ENCODE measurements at regions of chr16 and their contacts with region 1.

Region 1: DNA sequence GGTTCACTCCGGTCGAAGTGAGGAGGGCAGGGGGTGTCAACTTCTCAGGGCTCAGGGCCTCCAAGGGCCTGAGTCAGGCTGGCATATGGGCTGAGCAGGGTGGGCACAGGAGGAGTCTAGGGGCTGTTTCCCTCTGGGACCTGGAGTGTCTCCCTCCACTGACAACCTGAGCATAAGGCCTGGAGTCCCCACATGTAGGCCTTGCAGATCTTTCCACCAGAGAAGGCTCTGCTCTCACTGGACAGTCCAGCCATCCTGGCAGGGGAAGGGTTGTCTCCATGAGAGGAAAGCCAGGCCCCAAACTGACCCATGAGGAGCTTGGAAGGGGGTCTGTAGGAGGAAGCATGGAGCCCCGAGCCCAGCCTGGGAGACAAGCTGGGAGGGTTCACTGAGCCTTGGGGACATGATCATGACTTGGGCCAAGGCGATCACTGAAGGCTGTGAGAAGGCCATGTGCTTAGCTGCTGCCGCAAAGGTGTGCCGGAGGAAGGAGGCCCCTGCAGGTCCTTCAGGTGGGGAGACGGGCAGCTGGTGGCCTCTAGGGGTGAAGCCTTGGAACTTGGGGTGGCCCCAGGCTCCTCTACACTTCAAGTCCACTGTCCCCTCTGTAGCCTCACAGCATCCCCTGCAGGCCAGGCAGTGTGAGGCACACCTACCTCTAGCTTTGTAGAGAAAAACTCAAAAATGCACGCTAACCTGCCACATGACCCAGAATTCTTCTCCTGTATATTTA is 9.9 kb downstream of the CMTM2 start:
- DNase-seq: peak; percentile 83
- ATAC-seq: peak; percentile 88
- H3K4me3 Mint-ChIP-seq: peak overlapping the region; percentile 55
- H3K27ac Mint-ChIP-seq: peak overlapping the region; percentile 55
- H3K4me1 Mint-ChIP-seq: peaks cover 52% of the 10 kb centered on the region
- H3K27me3 Mint-ChIP-seq: no peaks in the 10 kb centered on the region

Region 2: DNA sequence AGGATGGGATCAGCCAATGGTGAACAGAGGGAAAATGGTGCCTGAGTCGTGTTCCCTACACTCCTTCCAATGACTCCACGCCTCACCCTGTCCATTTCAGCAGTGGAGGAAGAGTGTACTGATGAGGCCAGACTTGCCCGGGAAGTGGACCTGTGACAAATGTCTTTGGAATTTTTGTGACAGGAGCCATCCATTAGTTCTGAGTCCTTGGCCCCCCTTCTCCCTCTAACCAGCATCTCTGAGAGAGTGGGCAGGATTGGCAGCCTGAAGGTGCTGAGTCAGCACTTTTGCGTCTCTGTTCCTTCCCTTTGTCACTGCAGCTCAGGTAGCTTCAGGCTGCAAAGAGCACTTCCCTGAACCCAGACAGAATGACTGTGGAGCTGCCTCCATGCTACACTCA is 131.3 kb before region 1 on chr16:
- CTCF ChIA-PET with region 1: no interaction called
- POLR2A ChIA-PET with region 1: no interaction called
- DNase-seq: no peak
- ATAC-seq: no peak
- H3K4me3 Mint-ChIP-seq: no peak overlapping the region
- H3K27ac Mint-ChIP-seq: no peak overlapping the region
- H3K4me1 Mint-ChIP-seq: peaks cover 4% of the 10 kb centered on the region
- H3K27me3 Mint-ChIP-seq: peaks cover 17% of the 10 kb centered on the region

Region 3: DNA sequence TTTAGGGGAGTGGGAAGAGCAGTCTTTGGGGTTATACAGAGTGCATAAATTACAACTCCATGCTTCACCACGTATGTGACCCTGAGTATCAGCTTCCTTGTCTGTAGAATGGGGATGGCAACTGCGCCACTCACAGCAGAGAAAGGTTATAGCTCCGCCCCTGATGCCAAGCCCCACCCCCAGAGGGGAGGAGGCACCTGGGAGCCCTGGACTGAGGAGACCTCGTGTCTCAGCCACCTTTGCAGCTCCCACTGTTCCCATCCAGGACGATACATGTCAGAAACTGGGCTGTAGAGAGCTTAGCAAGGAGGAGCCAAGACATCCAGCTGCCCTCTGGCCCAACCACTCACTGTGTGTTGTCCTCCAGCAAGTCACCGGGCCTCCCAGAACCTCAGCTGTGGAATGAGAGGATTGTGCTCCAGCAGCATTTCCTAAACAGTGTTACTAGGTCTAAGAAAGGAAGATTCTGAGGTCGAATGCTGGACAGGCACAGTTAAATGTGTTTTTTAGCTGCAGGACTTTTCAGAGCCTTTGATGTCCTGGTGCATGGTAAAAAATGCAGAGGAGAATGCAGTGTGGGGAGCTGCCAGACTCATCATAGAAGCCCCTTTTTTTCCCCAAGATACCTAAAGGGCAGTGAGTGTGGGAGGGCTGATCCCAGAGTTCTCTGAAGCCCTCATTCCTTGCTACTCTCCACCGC is 112.7 kb before region 1 on chr16:
- CTCF ChIA-PET with region 1: interaction called, 12 read pairs
- POLR2A ChIA-PET with region 1: no interaction called
- DNase-seq: peak; percentile 56
- ATAC-seq: peak; percentile 22
- H3K4me3 Mint-ChIP-seq: no peak overlapping the region
- H3K27ac Mint-ChIP-seq: peak overlapping the region; percentile 48
- H3K4me1 Mint-ChIP-seq: peaks cover 48% of the 10 kb centered on the region
- H3K27me3 Mint-ChIP-seq: no peaks in the 10 kb centered on the region

Region 4: DNA sequence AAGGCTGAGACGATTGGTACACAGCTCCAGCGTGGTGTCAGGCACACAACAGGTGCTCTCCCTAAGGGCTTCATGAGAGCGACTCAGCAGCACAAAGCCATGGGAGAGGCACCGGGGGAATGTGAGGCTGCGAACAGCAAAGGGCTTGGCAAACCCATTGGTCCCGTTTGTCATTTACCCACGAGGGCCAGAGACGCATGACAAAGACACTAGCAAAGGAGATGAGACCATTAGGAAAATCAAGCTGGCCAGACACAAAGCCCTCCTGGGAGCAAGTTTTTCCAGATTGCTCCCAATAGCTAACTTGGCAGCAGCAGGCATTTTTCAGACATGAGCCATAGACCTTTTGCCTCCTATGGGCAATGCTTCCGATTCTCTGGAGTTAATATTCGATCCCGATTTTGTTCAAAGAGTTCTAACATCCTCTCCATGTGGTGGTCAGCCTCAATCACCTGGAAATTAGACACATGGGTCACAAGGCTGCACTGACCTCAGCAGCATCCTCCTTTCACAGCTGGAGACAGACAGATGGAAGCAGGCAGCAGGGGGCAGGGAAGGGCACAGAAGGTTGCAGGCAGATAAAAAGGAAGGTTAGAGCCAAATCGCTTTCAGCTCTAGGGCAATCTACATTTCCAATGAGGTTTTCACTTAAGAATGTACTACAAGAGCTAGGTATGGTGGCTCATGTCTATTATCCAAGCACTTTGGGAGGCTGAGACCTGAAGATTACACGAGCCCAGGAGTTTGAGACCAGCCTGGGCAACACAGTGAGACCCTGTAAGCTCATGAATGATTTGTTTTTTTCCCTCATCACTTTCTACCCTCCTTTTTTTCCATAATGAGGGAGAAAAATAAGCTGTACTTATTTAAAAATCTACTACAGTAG is 77.3 kb before region 1 on chr16:
- CTCF ChIA-PET with region 1: interaction called, 25 read pairs
- POLR2A ChIA-PET with region 1: no interaction called
- DNase-seq: no peak
- ATAC-seq: no peak
- H3K4me3 Mint-ChIP-seq: no peak overlapping the region
- H3K27ac Mint-ChIP-seq: no peak overlapping the region
- H3K4me1 Mint-ChIP-seq: peaks cover 28% of the 10 kb centered on the region
- H3K27me3 Mint-ChIP-seq: no peaks in the 10 kb centered on the region

Region 5: GRCh38 chr16:66677179-66677578 is 88.0 kb after region 1 on chr16:
- CTCF ChIA-PET with region 1: no interaction called
- POLR2A ChIA-PET with region 1: no interaction called
- DNase-seq: no peak
- ATAC-seq: no peak
- H3K4me3 Mint-ChIP-seq: no peak overlapping the region
- H3K27ac Mint-ChIP-seq: no peak overlapping the region
- H3K4me1 Mint-ChIP-seq: no peaks in the 10 kb centered on the region
- H3K27me3 Mint-ChIP-seq: no peaks in the 10 kb centered on the region

Region 6: GRCh38 chr16:66786551-66786950 is 197.4 kb after region 1 on chr16:
- CTCF ChIA-PET with region 1: no interaction called
- POLR2A ChIA-PET with region 1: no interaction called
- DNase-seq: no peak
- ATAC-seq: no peak
- H3K4me3 Mint-ChIP-seq: no peak overlapping the region
- H3K27ac Mint-ChIP-seq: no peak overlapping the region
- H3K4me1 Mint-ChIP-seq: no peaks in the 10 kb centered on the region
- H3K27me3 Mint-ChIP-seq: peaks cover 6% of the 10 kb centered on the region

Measured in activated CD8-positive, alpha-beta T cell treated with anti-CD3 and anti-CD28 coated beads, Interleukin-2, amount 10 ng/mL, durations not matched to agents 7 days and 5 days (primary cell).